AG04449 (cell line): ENCODE measurements at regions of chr12 and their contacts with region 1.

Region 1: GRCh38 chr12:60494244-60494643 is 898.4 kb downstream of the SLC16A7 start:
- DNase-seq: peak; percentile 4
- H3K4me3 ChIP-seq: no peak overlapping the region
- CTCF ChIP-seq: peak; percentile 49

Region 2: DNA sequence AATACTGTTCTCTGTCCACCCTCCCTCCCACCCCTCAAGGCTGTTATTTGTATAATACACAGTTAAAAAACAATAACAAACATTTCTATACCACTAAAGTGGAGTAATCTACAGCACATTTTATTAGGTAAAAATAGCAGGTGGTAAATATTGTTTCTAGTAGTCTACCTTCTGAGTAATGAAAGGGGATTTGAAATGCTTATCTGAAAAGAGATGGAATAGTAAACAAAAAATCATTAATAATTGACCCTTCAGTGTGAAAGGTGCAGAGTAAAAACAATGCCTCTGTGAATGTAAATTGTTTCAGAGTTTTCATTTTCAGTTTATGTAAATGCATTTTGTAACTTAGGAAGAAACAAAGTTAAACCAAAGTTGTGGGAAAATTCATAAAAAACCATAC is 577.3 kb before region 1 on chr12:
- CTCF ChIA-PET with region 1: no interaction called
- POLR2A ChIA-PET with region 1: no interaction called
- DNase-seq: no peak
- H3K4me3 ChIP-seq: no peak overlapping the region
- CTCF ChIP-seq: no peak

Region 3: GRCh38 chr12:60106214-60106613 is 388.0 kb before region 1 on chr12:
- CTCF ChIA-PET with region 1: interaction called, 10 read pairs
- POLR2A ChIA-PET with region 1: no interaction called
- DNase-seq: no peak
- H3K4me3 ChIP-seq: no peak overlapping the region
- CTCF ChIP-seq: peak; percentile 17

Region 4: DNA sequence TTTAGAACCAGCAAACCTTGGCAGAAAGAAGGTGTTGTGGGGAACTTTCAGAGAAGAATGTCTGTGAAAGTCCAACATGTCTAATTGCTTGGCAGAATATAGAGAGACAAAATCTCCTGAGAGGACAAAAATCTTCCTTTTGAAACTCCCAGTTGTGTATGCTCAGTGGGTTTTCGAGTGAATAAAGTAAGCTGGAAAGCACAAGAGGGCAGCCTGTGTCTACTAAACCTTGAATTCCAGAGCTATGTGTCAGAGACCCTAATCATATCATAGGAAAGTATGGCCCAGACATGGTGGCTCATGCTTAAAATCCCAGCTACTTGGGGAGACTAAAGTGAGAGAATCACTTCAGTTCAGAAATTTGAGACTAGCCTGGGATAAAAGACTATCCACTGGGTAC is 237.2 kb before region 1 on chr12:
- CTCF ChIA-PET with region 1: interaction called, 14 read pairs
- POLR2A ChIA-PET with region 1: no interaction called
- DNase-seq: peak; percentile 44
- H3K4me3 ChIP-seq: no peak overlapping the region
- CTCF ChIP-seq: peak; percentile 7